Activated CD4-positive, alpha-beta memory T cell treated with anti-CD3 and anti-CD28 coated beads, Interleukin-2, amount 10 ng/mL, durations not matched to agents 7 days and 5 days (primary cell): ENCODE measurements at regions of chr1 and their contacts with region 1.

Region 1: DNA sequence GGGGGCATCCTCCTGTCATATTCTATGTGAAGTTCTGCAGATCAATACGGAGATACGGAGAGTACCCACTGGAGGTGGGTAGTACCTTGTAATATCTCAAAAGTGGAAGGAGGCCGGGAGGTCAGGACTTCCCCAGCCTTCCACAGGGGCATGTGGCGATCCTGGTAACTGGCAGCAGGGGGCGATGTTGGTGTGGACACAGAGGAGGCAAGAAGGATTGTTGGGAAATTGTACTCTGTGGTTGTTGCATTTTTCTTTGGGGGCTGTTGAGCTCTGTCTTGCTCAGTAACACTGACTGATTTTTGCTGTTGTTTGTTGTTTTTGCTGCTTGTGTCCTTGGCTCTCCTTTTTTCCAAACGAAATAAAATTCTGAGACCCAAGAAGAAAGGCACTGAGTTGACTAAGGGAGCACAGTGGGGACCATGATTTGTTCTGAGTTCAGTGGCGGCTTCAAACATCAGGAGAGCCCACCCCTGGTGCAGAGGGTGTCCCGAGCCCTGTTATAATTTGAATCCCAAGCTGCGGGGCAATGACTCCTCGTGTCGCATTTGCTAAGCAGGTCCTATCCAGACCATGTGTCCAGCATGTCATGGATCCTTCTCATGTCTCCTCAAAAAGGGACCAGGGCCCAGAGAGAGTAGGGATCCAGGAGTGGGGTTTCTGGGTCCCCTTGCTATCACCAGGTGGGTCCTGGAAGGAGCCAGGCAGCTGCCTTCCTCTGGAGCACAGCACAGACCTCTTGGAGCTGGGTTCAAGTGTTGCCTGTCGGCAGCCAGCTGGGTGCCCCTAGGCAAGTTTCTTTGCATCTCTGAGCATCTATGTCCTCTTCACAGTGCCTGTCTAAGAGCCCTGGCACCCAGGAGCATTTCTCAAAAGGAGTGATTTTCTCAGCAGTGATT is 22.8 kb downstream of the LHX4 start:
- DNase-seq: peak; percentile 75
- H3K4me3 Mint-ChIP-seq: no peak overlapping the region
- H3K27ac Mint-ChIP-seq: no peak overlapping the region
- H3K4me1 Mint-ChIP-seq: peaks cover 5% of the 10 kb centered on the region
- H3K27me3 Mint-ChIP-seq: peaks cover 4% of the 10 kb centered on the region

Region 2: GRCh38 chr1:179888071-179888470 is 364.8 kb before region 1 on chr1:
- CTCF ChIA-PET with region 1: no interaction called
- POLR2A ChIA-PET with region 1: no interaction called
- DNase-seq: no peak
- H3K4me3 Mint-ChIP-seq: no peak overlapping the region
- H3K27ac Mint-ChIP-seq: no peak overlapping the region
- H3K4me1 Mint-ChIP-seq: peaks cover 39% of the 10 kb centered on the region
- H3K27me3 Mint-ChIP-seq: no peaks in the 10 kb centered on the region

Region 3: DNA sequence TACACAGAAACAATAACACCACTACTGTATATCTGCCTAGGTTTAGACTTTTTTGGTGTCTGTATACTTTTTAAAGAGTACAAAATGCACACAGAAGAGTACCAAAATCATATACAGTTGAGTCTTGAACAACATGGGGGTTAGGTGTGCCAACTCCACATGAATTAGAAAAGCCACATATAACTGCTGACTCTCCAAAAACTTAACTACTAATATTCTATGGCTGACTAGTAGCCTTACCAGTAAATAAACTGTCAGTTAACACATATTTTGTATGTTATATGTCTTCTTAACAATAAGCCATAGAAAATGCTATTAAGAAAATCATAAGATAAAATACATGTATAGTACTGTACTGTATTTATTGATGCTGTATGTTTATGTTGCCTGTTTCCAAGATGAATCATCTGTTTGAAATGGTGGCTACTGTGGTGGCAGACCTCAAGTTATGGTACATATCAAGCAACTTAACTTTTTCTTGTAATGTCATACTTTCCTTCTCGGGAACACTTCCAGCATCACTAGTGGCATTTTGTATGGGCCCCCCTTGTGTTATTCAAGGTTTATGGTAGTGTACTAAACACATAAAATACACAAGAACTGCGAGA is 48.4 kb after region 1 on chr1:
- CTCF ChIA-PET with region 1: no interaction called
- POLR2A ChIA-PET with region 1: no interaction called
- DNase-seq: no peak
- H3K4me3 Mint-ChIP-seq: no peak overlapping the region
- H3K27ac Mint-ChIP-seq: no peak overlapping the region
- H3K4me1 Mint-ChIP-seq: peaks cover 2% of the 10 kb centered on the region
- H3K27me3 Mint-ChIP-seq: no peaks in the 10 kb centered on the region

Region 4: DNA sequence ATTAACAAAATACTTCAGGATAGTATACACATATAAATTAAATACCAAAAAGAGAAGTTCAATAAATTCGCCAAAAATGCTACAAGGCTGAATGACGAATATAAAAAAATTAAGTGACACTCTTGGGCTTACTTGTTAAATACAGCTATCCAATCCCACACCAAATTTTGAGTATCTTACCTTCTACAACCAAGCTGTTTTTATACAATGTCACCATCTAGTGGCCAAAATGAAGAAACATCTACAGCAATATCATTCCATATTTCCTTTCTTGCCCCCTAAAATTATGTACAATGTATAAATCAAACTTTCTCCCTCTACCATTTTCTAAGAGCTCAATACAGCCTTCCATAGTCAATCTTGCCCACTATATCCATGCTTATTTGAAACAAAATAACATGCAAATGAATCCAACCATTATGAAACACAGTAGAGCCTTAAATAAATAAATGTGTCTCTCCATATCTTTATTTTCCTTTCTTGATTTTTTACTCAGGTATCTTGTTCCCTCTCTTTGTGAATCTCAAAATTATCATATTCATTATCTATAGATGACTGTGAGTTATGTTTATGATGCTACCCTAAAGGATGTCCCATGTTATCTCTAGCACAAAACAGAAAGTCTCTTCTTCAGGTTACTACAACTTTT is 163.2 kb after region 1 on chr1:
- CTCF ChIA-PET with region 1: interaction called, 44 read pairs
- POLR2A ChIA-PET with region 1: interaction called, 3 read pairs
- DNase-seq: no peak
- H3K4me3 Mint-ChIP-seq: no peak overlapping the region
- H3K27ac Mint-ChIP-seq: no peak overlapping the region
- H3K4me1 Mint-ChIP-seq: no peaks in the 10 kb centered on the region
- H3K27me3 Mint-ChIP-seq: no peaks in the 10 kb centered on the region

Region 5: GRCh38 chr1:180482425-180483275 is 229.8 kb after region 1 on chr1:
- CTCF ChIA-PET with region 1: interaction called, 16 read pairs
- POLR2A ChIA-PET with region 1: no interaction called
- DNase-seq: no peak
- H3K4me3 Mint-ChIP-seq: no peak overlapping the region
- H3K27ac Mint-ChIP-seq: no peak overlapping the region
- H3K4me1 Mint-ChIP-seq: peaks cover 8% of the 10 kb centered on the region
- H3K27me3 Mint-ChIP-seq: no peaks in the 10 kb centered on the region